Activated CD8-positive, alpha-beta T cell treated with anti-CD3 and anti-CD28 coated beads for 36 hours (primary cell): ENCODE measurements at regions of chr13 and their contacts with region 1.

Region 1: GRCh38 chr13:97432917-97433726 is 847 bp upstream of the RAP2A start:
- DNase-seq: peak; percentile 98
- ATAC-seq: peak; percentile 81
- H3K4me3 Mint-ChIP-seq: peak overlapping the region; percentile 97
- H3K27ac Mint-ChIP-seq: peak overlapping the region; percentile 97
- H3K4me1 Mint-ChIP-seq: peaks cover 25% of the 10 kb centered on the region
- H3K27me3 Mint-ChIP-seq: peaks cover 1% of the 10 kb centered on the region
- CTCF ChIP-seq: no peak

Region 2: DNA sequence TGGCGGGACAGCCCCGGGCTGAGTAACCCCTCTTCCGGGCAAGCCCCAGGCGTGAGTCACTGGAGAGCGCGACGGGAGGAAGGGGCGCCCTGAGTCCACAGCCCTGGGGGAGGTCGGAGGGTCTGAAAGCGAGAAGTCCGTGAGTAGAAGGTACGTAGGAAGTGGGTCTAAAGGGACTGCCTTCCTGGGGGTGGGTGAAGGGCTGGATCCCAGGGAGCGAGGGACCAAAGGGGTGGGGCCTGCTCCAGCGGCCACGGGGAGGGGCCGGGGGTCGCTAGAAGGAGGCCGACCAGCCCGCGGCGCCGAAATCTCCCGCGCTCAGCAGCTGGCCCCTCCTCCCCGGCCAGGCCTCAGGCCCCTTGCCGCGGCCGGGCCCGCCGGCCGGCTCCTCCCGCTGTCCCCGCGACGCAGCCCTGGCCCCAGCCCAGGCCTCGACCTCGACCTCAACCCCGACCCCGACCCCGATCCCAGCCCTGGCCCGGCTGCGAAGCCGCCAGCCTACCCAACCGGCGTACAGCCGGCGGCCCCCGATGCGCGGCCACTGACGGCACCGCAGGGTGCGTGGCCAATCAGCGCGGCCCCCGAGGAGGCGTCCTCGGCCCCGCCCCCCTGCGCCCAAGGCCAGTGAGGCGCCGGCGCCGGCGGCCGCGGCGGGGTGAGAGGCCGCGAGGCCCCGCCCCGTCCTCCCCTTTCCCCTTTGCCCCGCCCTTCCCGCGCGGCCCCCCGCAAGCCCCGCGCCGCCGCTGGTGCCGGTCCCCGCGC is 542.9 kb after region 1 on chr13:
- CTCF ChIA-PET with region 1: no interaction called
- POLR2A ChIA-PET with region 1: no interaction called
- intact Hi-C with region 1: loop called (anchors 10 kb)
- DNase-seq: peak; percentile 90
- ATAC-seq: peak; percentile 91
- H3K4me3 Mint-ChIP-seq: peak overlapping the region; percentile 89
- H3K27ac Mint-ChIP-seq: peak overlapping the region; percentile 98
- H3K4me1 Mint-ChIP-seq: peaks cover 27% of the 10 kb centered on the region
- H3K27me3 Mint-ChIP-seq: peaks cover 1% of the 10 kb centered on the region
- CTCF ChIP-seq: no peak